Ascending aorta (tissue), 2 donors: ENCODE measurements at regions of chr7 and their contacts with region 1.

Region 1: DNA sequence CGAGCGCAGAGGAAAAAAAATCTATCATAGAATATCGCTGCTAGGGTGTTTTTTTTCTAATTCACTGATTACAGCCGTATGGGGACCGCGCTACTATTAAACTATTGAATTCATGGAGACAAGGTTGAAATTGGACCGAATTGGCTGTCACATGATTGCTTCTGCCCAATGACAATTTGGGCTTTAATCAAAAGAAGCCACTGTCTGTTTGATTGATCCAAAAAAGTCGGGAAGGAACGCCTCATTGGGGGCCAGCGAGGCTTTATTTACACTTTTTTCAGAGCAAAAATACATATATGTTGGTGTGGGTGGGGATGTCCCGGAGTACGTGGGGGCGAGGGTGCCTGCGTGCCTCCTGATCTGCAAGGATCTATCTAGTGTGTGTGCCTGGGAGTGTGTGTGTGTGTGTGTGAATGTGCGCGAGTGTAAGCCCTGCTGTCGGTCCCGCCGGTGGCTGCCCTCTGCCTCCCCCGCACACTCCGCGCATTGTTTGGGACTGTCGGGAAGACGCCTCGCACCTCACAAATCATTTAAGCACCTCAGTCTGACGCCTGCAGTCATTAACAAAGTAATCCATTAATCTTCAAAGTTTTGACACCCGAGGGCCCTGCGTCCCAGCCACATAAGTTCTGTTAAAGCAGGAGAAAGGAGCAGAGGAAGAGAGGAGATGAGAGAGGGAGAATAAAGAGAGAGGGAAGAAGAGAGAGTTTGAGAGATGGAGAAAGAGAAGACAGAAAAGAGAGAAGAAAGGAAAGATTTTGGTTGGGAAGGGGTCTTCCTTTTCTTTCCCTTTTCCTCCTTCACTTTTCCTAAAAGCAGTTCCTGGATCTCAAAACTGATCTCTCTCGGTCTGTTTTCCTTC is at the start of gene HOXA2:
- DNase-seq: peak in 1 of 2 donors; percentile 85
- H3K4me3 ChIP-seq: peak within 1 kb of the TSS; percentile 68 to 79
- H3K27ac ChIP-seq: peak within 1 kb of the TSS; percentile 89 to 97
- H3K4me1 ChIP-seq: peaks cover 4 to 27% of the 10 kb centered on the region in 2 donors
- H3K27me3 ChIP-seq: no peaks in the 10 kb centered on the region
- CTCF ChIP-seq: no peak
- total RNA-seq, gene HOXA2: 36.5 TPM

Region 2: DNA sequence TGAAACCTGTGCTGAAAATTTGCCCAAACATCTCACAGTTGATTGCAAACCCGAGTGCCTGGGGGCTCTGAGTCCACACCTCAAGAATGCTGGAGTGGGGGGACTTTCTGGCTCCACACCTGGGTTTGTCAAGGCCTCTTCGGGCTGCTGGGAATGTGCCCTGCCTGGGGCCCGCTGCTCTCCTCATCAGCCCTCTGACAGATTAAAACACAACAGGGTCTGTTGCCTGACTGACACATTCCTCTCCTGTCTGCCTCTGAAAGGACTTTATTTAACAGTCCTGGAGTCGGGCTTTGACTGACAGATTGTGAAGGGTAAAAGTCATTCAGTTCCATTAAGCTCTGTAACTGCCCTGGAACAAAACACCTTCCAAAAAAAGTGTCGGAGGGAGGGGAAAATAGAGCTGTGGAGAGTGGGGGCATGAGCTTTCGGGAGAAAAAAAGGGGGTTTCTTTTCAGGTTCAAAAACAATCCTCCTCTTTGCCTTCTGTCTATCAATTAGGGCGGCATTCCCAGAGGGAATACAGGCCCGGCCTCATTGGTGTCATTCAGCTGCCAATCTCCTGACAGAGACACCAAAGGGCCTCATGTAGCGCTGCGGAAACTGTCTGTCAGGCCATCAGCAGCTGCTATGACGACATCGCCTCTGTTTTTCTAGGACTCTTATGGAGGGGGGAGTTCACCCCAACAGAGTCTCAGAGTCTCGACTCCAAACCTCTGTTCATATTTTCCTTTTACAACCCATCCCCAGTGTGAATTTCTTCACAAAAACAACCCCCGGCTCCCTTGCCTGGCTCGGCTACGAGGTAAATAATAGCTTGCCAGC is 1349.6 kb before region 1 on chr7:
- intact Hi-C with region 1: loop called (anchors 5 kb)
- DNase-seq: peak in 1 of 2 donors; percentile 67
- H3K4me3 ChIP-seq: no peak overlapping the region
- H3K27ac ChIP-seq: peak overlapping the region; percentile 31 to 72
- H3K4me1 ChIP-seq: peaks cover 0 to 18% of the 10 kb centered on the region in 2 donors
- H3K27me3 ChIP-seq: no peaks in the 10 kb centered on the region
- CTCF ChIP-seq: no peak

Region 3: GRCh38 chr7:27122077-27122910 is 19.5 kb after region 1 on chr7:
- intact Hi-C with region 1: loop called (anchors 2 kb)
- DNase-seq: peak in 1 of 2 donors; percentile 63
- H3K4me3 ChIP-seq: peak overlapping the region; percentile 42 to 67
- H3K27ac ChIP-seq: peak overlapping the region; percentile 89 to 97
- H3K4me1 ChIP-seq: peaks cover 0 to 22% of the 10 kb centered on the region in 2 donors
- H3K27me3 ChIP-seq: no peaks in the 10 kb centered on the region
- CTCF ChIP-seq: no peak

Region 4: GRCh38 chr7:27160546-27161213 is 57.9 kb after region 1 on chr7:
- intact Hi-C with region 1: no loop called
- DNase-seq: peak in 1 of 2 donors; percentile 93
- H3K4me3 ChIP-seq: peak overlapping the region; percentile 47 to 72
- H3K27ac ChIP-seq: peak overlapping the region in 1 of 2 donors; percentile 51
- H3K4me1 ChIP-seq: no peaks in the 10 kb centered on the region
- H3K27me3 ChIP-seq: peaks cover 11% of the 10 kb centered on the region
- CTCF ChIP-seq: peak; percentile 97 to 100 (median 99)